ENCODE measurements at regions of chr9 and their contacts with region 1.

Region 1: DNA sequence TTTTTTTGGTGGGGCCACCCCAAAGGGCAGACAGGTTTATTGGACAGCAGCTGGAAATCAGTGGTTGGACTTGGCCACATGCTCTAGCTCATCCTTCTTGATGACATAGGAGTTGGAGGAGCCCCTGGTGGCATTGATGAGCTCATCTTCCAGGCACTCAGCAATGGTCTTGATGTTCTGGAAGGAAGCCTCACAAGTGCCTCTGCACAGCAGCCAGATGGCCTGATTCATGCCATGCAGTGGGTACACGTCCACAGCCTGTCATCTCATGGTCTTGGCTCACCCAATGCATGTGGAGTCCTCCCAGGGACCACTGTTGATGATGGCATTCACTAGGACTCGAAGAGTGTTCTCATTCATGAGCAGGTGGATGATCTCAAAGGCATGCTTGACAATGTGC is 11.3 kb upstream of the RCL1 start:
- DNase-seq: no peak
- ATAC-seq: no peak
- H3K4me3 ChIP-seq: no peak overlapping the region
- H3K27ac ChIP-seq: no peak overlapping the region
- H3K4me1 ChIP-seq: no peaks in the 10 kb centered on the region
- H3K27me3 ChIP-seq: no peaks in the 10 kb centered on the region
- CTCF ChIP-seq: no peak

Region 2: GRCh38 chr9:4796988-4797853 is 15.8 kb after region 1 on chr9:
- CTCF ChIA-PET with region 1: no interaction called
- POLR2A ChIA-PET with region 1: interaction called, 13 read pairs
- intact Hi-C with region 1: no loop called
- DNase-seq: peak; percentile 50
- ATAC-seq: no peak
- H3K4me3 ChIP-seq: no peak overlapping the region
- H3K27ac ChIP-seq: no peak overlapping the region
- H3K4me1 ChIP-seq: peaks cover 9% of the 10 kb centered on the region; the same call in 1 of the 2 replicates
- H3K27me3 ChIP-seq: no peaks in the 10 kb centered on the region
- CTCF ChIP-seq: peak; percentile 73

Region 3: DNA sequence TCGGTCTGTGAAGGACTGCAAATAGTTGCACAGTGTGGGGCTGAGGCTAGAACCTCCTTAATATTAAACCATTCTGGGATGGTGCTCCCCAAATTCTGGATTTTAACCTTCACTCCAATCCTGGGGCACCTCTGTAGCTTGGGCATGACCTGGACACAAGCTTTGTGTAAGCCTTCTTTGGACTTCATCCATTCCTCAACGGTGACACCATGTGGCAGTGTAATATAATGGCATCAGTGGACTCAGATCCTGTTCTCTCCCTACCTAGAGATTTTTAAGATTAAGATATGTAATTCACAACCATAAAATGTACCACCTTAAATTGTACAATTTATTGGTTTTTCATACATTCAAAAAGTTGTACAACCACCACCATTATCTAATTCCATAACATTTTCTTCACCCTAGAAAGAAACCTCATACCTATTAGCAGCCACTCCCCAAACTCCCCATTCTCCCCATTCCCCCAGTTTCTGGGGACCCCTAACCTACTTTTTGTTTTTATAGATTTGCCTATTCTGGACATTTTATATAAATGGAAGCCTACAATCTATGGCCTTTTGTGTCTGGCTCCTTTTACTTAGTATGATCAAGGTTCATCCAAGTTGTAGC is 661.1 kb after region 1 on chr9:
- CTCF ChIA-PET with region 1: no interaction called
- POLR2A ChIA-PET with region 1: no interaction called
- intact Hi-C with region 1: no loop called
- DNase-seq: peak; percentile 67
- ATAC-seq: 0 out of 2 replicates have a peak, but pooled peaks have one; percentile 19
- H3K4me3 ChIP-seq: no peak overlapping the region
- H3K27ac ChIP-seq: no peak overlapping the region
- H3K4me1 ChIP-seq: peaks cover 31% of the 10 kb centered on the region
- H3K27me3 ChIP-seq: no peaks in the 10 kb centered on the region
- CTCF ChIP-seq: peak; percentile 62